Mammary epithelial cell (primary cell): ENCODE measurements at regions of chr14 and their contacts with region 1.

Region 1: GRCh38 chr14:72598311-72598710 is 295.6 kb downstream of the DPF3 start:
- DNase-seq: no peak
- H3K4me3 ChIP-seq: no peak overlapping the region
- H3K27ac ChIP-seq: no peak overlapping the region
- H3K4me1 ChIP-seq: no peaks in the 10 kb centered on the region
- H3K27me3 ChIP-seq: no peaks in the 10 kb centered on the region
- CTCF ChIP-seq: no peak

Region 2: GRCh38 chr14:72558721-72559120 is 39.6 kb before region 1 on chr14:
- CTCF ChIA-PET with region 1: no interaction called
- dilution Hi-C with region 1: loop called (anchors 5 kb)
- in situ Hi-C with region 1: no loop called
- intact Hi-C with region 1: no loop called
- DNase-seq: peak; percentile 88
- H3K4me3 ChIP-seq: no peak overlapping the region
- H3K27ac ChIP-seq: peak overlapping the region; percentile 85
- H3K4me1 ChIP-seq: peaks cover 36% of the 10 kb centered on the region
- H3K27me3 ChIP-seq: no peaks in the 10 kb centered on the region
- CTCF ChIP-seq: no peak

Region 3: GRCh38 chr14:72830786-72831594 is 232.7 kb after region 1 on chr14:
- CTCF ChIA-PET with region 1: interaction called, 10 read pairs
- dilution Hi-C with region 1: no loop called
- in situ Hi-C with region 1: no loop called
- intact Hi-C with region 1: no loop called
- DNase-seq: no peak
- H3K4me3 ChIP-seq: no peak overlapping the region
- H3K27ac ChIP-seq: no peak overlapping the region
- H3K4me1 ChIP-seq: no peaks in the 10 kb centered on the region
- H3K27me3 ChIP-seq: no peaks in the 10 kb centered on the region
- CTCF ChIP-seq: no peak